Aorta (tissue), 5 donors: ENCODE measurements at regions of chr11 and their contacts with region 1.

Region 1: DNA sequence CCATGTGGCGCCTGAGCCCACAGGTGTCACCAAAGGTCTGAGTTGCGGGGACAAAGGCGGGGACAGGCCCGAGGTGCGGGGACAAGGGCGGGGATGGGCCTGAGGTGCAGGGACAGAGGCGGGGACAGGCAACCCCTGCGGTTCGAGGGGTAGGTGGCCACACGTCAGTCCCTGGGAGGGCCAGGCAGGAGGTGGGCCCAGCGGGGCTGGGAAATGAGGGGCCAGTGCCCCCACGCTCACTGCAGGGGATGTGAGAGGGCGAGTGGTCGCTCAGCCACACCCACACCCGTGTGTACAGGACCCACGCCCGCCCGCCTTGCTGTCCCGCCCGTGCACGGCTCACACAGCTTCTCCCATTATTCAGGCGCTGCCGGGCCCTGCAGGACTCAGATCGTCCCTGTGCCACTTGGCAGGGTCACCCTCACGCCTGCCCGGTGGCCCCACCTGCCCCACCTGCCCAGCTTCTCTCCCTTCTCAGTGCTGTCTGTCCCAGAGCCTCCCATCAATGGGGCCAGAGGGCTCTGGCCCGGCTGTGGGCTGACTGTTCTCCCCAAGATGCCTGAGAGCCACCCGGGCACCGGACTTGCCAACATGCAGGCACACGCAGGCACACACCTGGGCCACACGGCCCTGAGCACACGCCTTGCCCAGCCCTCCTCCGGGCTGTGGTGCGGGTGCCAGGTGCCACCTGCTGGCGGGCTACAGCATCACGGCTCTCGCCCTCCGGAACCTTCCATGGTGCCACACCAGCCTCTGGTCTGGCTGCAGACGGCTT is 14.2 kb upstream of the MUC6 start:
- DNase-seq: peak; percentile 74 to 86
- ATAC-seq: peak; percentile 63
- H3K4me3 ChIP-seq: no peak overlapping the region
- H3K27ac ChIP-seq: no peak overlapping the region
- H3K4me1 ChIP-seq: no peaks in the 10 kb centered on the region
- H3K27me3 ChIP-seq: no peaks in the 10 kb centered on the region

Region 2: GRCh38 chr11:848380-848931 is 202.3 kb before region 1 on chr11:
- intact Hi-C with region 1: loop called (anchors 2 to 5 kb)
- DNase-seq: peak in 1 of 2 donors; percentile 88
- ATAC-seq: no peak
- H3K4me3 ChIP-seq: no peak overlapping the region
- H3K27ac ChIP-seq: no peak overlapping the region
- H3K4me1 ChIP-seq: no peaks in the 10 kb centered on the region
- H3K27me3 ChIP-seq: no peaks in the 10 kb centered on the region

Region 3: GRCh38 chr11:925496-926321 is 125.1 kb before region 1 on chr11 and contains the start of gene AP2A2:
- intact Hi-C with region 1: loop called in 1 of 2 experiments (anchors 10 kb)
- DNase-seq: peak; percentile 94 to 96
- ATAC-seq: peak; percentile 91
- H3K4me3 ChIP-seq: peak within 1 kb of the TSS; percentile 96 to 97
- H3K27ac ChIP-seq: peak within 1 kb of the TSS; percentile 7 to 62
- H3K4me1 ChIP-seq: no peaks in the 10 kb centered on the region
- H3K27me3 ChIP-seq: no peaks in the 10 kb centered on the region
- total RNA-seq, gene AP2A2: 93.3 to 147 TPM

Region 4: DNA sequence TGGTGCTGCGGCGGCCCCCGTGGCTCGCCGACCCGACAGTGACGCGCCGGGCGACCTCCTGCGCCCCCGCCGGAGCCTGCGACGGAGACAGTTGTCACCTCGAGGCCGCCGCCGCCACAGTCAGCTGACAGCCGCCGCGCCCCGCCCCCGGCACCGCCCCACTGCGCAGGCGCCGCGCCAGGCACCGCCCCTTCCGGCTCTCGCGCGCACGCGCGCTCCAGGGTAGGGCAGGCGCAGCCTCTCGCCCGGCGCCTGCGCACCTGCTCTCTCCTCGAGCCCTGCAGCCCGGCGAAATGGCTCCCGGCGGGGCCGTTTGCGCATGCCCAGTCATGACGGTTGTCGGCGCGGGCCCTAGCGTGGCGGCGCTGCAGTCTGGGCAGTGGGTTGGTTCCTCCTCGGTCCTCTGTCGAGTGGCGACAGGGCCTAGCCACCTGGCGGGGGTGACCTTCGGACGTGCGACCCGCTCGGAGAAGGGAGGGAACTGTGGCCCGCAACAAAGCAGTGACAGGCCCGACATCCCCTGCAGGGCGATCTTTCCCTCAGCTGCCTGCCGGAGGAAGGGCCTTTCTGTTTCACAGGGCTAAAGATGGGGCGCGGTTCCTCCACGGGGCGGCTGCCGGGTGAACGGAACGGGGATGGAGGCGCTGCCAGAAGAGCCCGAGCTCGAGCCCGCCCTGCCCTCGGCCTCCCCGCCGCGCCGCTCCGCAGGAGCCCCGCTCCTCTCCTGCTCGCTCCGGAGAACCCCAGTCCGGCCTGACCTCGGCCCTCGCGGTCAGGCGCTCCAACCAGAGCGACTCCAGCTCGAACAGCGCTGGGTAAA is 258.9 kb after region 1 on chr11 and contains the start of gene TOLLIP:
- intact Hi-C with region 1: no loop called
- DNase-seq: peak; percentile 97 to 99
- ATAC-seq: peak; percentile 97
- H3K4me3 ChIP-seq: peak within 1 kb of the TSS; percentile 75 to 93
- H3K27ac ChIP-seq: peak within 1 kb of the TSS; percentile 4 to 71
- H3K4me1 ChIP-seq: no peaks in the 10 kb centered on the region
- H3K27me3 ChIP-seq: no peaks in the 10 kb centered on the region
- total RNA-seq, gene TOLLIP: 49.1 to 52.1 TPM